ENCODE measurements at regions of chr21 and their contacts with region 1.

Region 1: GRCh38 chr21:26389971-26390641 is 183.0 kb downstream of the CYYR1 start:
- DNase-seq: peak; percentile 60 to 98
- H3K4me3 ChIP-seq: peak overlapping the region; percentile 26; the same call in 1 of the 2 replicates
- H3K27ac ChIP-seq: peak overlapping the region; percentile 89
- H3K4me1 ChIP-seq: peaks cover 45% of the 10 kb centered on the region
- H3K27me3 ChIP-seq: no peaks in the 10 kb centered on the region
- CTCF ChIP-seq: no peak

Region 2: DNA sequence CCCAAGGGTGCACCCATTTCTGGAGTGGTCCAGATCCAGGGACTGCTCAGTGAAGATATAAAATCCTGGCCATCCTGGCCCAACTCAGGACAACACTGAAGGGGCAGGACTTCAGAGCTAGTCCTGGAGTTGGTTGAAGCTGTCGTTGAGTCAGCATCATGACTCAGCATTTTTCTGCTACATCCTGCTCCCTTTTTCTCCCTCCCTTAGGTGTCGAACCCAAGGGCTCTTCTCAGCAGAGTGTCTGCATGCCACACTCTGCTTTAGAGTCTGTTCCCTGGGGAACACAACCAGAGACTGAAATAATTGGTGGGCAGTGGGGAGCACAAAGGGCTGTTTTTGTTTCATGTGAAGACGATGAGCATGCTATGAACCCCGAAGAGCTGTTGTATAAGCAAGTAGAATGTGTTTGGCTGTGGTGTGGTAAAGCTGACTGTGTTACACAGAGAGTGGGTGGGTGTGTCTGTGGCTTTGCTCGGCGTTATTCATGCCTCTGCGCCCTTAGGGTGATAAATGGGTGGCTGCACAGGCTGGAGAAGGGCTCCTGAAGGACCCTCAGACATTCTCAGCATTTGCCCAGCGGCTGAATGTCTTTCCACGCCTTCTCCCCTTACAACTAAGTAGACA is 15.7 kb after region 1 on chr21:
- CTCF ChIA-PET with region 1: no interaction called
- POLR2A ChIA-PET with region 1: no interaction called
- intact Hi-C with region 1: loop called (anchors 1 kb)
- DNase-seq: peak; percentile 49 to 53
- H3K4me3 ChIP-seq: peak overlapping the region; percentile 9; the same call in 1 of the 2 replicates
- H3K27ac ChIP-seq: peak overlapping the region; percentile 53
- H3K4me1 ChIP-seq: peaks cover 18% of the 10 kb centered on the region
- H3K27me3 ChIP-seq: no peaks in the 10 kb centered on the region
- CTCF ChIP-seq: no peak